ENCODE measurements at regions of chr10 and their contacts with region 1.

Region 1: GRCh38 chr10:43436400-43437140 is at the start of gene ZNF487:
- DNase-seq: peak; percentile 76 to 99 (median 86)

Region 2: DNA sequence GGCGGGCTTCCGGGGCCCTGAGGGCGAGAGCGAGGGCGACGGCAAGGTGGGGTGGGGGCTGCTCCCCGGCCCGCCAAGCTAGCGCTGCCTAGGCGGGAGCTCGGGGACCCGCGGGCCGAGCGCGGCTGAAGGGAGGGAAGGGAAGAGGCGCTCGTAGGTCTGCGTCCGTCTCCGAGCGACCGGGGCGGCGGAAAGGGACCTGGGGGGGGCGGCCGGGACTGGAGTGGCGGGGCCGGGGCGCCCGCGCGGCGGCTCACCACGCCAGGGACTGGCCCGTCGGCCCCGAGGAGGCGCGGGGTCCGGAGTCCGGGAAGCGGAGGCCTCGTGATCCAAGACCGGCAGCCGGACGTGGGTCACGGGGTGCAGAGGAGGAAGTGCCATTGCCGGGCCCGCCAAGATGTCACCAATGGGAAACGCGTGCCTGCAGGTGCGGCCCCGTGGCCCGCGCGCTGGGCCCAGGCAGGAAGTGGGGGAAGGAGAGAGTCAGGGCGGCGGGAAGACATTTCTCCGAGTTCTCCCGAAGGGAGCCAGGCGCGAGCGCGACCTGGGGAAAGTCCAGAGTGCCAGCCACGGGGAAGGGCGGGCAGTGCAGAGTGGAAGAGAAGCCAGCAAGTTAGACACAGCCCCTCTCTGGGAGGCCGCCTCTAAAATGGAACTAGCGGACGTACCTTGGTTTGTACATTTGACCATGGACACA is 39.5 kb before region 1 on chr10:
- intact Hi-C with region 1: loop called (anchors 5 kb)
- DNase-seq: peak; percentile 74 to 98 (median 84)

Region 3: GRCh38 chr10:43408710-43409384 is 27.7 kb before region 1 on chr10 and contains the start of gene HNRNPF:
- intact Hi-C with region 1: loop called (anchors 1 kb)
- DNase-seq: peak; percentile 84 to 99 (median 94)

Region 4: GRCh38 chr10:43420369-43421200 is 16.0 kb before region 1 on chr10:
- intact Hi-C with region 1: loop called (anchors 1 kb)
- DNase-seq: peak; percentile 72 to 98 (median 82)

Measured in posterior cingulate gyrus (tissue), 11 donors.